Mammary epithelial cell (primary cell): ENCODE measurements at regions of chr2 and their contacts with region 1.

Region 1: GRCh38 chr2:29053670-29054400 is 20.5 kb downstream of the PCARE start:
- DNase-seq: peak; percentile 41
- H3K4me3 ChIP-seq: no peak overlapping the region
- H3K27ac ChIP-seq: no peak overlapping the region
- H3K4me1 ChIP-seq: peaks cover 21% of the 10 kb centered on the region
- H3K27me3 ChIP-seq: no peaks in the 10 kb centered on the region
- CTCF ChIP-seq: peak; percentile 52 to 74

Region 2: GRCh38 chr2:28976584-28976983 is 77.3 kb before region 1 on chr2:
- CTCF ChIA-PET with region 1: no interaction called
- dilution Hi-C with region 1: no loop called
- in situ Hi-C with region 1: no loop called
- intact Hi-C with region 1: loop called (anchors 5 kb)
- DNase-seq: peak; percentile 92
- H3K4me3 ChIP-seq: no peak overlapping the region
- H3K27ac ChIP-seq: no peak overlapping the region
- H3K4me1 ChIP-seq: peaks cover 21% of the 10 kb centered on the region
- H3K27me3 ChIP-seq: no peaks in the 10 kb centered on the region
- CTCF ChIP-seq: no peak

Region 3: GRCh38 chr2:29115797-29116781 is 62.3 kb after region 1 on chr2:
- CTCF ChIA-PET with region 1: no interaction called
- dilution Hi-C with region 1: no loop called
- in situ Hi-C with region 1: no loop called
- intact Hi-C with region 1: loop called (anchors 1 kb)
- DNase-seq: peak; percentile 85
- H3K4me3 ChIP-seq: peak overlapping the region; percentile 53 to 80 (median 56)
- H3K27ac ChIP-seq: peak overlapping the region; percentile 99
- H3K4me1 ChIP-seq: peaks cover 64% of the 10 kb centered on the region
- H3K27me3 ChIP-seq: no peaks in the 10 kb centered on the region
- CTCF ChIP-seq: no peak

Region 4: DNA sequence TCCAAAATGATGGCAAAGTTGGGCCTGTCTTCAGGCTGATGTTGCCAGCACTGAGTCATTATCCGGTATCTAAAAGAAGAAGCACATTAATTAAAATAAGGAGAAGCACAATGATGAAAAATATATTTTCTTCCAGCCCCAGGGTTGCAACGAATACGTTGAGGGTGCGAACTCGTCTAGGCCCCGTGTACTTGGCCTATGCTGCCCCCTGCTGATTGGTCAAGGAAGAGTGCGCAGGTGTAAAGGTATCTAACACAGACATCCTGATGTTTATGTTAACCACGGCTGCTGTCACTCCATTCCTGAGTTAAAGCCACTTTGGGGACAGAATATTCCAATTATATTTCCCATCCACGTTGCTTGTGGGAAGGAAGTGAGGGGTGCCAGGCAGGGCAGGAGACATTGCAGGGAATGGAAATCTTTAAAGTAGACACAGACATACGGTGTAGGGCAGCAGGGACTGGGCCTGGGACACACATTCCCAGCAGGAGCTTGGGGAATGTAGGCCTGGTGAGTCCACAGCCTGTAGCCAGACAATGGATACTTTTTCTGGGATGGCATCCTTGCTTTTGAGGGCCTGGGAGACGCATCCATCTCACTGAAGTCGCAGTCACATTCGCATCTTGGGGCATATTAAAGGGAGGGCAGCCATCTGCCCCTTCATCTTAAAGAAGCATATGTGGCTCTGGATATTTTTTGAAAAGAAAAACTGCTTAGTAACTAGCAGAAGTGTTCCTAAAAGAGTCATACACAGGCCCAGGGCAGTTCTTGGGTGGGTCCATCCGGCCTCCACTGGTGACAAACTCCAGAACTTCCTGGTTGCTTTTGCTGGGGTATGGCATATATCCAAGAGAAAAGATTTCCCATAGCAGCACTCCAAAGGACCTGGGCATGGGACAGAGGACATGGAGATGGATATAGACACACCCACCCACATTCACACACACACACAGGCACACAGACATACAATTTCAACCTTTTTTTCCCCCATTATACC is 143.3 kb after region 1 on chr2:
- CTCF ChIA-PET with region 1: no interaction called
- dilution Hi-C with region 1: no loop called
- in situ Hi-C with region 1: loop called in 1 of 2 experiments (anchors 10 kb)
- intact Hi-C with region 1: loop called (anchors 1 kb)
- DNase-seq: peak; percentile 49
- H3K4me3 ChIP-seq: no peak overlapping the region
- H3K27ac ChIP-seq: no peak overlapping the region
- H3K4me1 ChIP-seq: no peaks in the 10 kb centered on the region
- H3K27me3 ChIP-seq: no peaks in the 10 kb centered on the region
- CTCF ChIP-seq: peak; percentile 78 to 85

Region 5: DNA sequence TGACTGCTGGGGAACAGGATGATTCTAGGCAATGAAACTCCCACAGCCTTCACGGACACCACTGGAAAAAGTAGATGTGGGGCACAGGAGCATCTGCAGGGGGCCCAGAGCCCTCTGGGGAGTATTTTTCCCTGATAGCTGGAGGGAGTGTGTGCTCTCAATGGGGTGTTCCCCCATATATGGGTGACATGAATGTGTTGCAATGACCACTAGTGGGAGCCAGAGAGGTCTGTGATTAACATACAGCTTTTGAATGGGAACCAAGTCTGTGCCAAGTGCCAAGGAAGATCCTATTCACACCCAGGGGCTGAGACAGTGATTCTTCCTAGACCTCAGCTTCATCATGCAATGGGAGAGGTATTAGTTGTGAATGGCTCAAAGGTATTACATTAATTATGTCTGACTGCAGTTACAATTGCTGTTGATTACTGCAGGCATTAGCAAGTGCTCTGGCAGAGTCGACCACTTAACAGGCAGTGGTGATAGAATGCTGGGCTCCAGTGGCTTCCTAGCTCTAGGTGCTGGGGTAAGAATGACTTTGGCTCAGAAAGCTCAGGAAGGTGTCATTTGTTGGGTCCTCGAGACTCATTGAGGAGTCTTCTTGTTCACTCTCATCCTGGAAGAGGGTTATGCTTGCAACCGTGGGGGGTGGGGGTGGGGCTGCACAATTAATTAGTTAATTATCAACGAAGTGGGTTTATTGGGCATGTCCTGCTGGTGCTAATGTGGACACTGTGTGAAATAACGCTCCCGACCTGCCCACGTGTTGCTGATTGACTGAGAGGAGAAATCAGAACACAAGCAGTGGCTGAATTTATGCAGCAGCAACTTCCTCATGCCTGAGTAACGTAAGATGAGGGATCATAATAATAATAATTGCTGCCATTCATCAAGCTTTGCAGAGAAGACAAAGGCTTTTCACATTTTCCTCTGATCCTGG is 255.5 kb after region 1 on chr2:
- CTCF ChIA-PET with region 1: interaction called, 16 read pairs
- dilution Hi-C with region 1: no loop called
- in situ Hi-C with region 1: no loop called
- intact Hi-C with region 1: no loop called
- DNase-seq: peak; percentile 47
- H3K4me3 ChIP-seq: no peak overlapping the region
- H3K27ac ChIP-seq: no peak overlapping the region
- H3K4me1 ChIP-seq: no peaks in the 10 kb centered on the region
- H3K27me3 ChIP-seq: peaks cover 2% of the 10 kb centered on the region
- CTCF ChIP-seq: peak; percentile 89

Region 6: GRCh38 chr2:29834624-29835023 is 780.8 kb after region 1 on chr2:
- CTCF ChIA-PET with region 1: no interaction called
- dilution Hi-C with region 1: no loop called
- in situ Hi-C with region 1: no loop called
- intact Hi-C with region 1: loop called (anchors 10 kb)
- DNase-seq: peak; percentile 38
- H3K4me3 ChIP-seq: no peak overlapping the region
- H3K27ac ChIP-seq: no peak overlapping the region
- H3K4me1 ChIP-seq: no peaks in the 10 kb centered on the region
- H3K27me3 ChIP-seq: peaks cover 4% of the 10 kb centered on the region
- CTCF ChIP-seq: no peak